Posterior cingulate gyrus (tissue), 11 donors: ENCODE measurements at regions of chr11 and their contacts with region 1.

Region 1: DNA sequence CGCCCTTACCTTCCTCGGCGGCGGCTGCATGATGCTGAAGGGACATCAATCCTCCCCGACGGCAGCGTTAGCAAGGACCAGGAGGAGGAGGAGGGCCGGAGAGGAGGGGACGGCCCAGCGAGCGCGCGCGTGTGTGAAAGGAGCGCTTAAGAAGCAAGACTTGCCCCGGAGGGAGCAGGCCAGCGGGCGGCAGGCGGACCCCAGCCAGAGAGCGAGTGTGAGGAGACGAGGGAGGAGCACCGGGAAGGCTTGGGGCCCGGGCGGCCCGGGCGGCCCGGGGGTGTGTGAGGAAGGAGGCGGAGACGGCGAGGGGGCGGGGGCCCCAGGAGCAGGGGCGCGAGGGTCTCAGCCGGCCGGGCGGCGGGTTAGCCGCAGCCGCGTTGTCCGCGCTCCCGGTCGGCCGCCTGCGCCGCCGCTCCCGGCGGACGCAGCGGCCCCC is 251 bp downstream of the FCHSD2 start:
- DNase-seq: peak in 8 of 10 donors; percentile 41 to 92 (median 52)

Region 2: GRCh38 chr11:72831513-72832300 is 310.2 kb before region 1 on chr11:
- intact Hi-C with region 1: loop called (anchors 10 kb)
- DNase-seq: peak; percentile 76 to 98 (median 90)

Region 3: GRCh38 chr11:72924568-72925190 is 217.2 kb before region 1 on chr11:
- intact Hi-C with region 1: loop called (anchors 5 kb)
- DNase-seq: no peak

Region 4: DNA sequence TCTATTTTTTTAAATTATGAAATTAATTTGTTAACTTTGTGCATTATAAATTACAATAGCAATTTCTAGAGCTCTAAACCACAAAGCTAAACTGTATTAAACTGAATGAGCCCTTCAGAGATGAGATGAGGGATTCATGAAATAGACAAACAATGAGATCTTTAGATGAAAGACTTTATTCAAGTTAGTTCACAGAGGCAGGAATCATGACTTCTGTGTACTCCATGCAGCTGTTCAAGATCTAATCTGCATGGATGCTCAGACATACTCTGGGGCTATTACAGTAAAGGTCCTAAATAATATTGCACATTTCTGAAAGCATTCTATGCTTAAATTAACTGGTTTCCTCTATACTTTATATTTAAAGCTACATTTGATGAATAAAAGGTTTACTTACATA is 122.4 kb before region 1 on chr11:
- intact Hi-C with region 1: loop called (anchors 5 kb)
- DNase-seq: no peak

Region 5: DNA sequence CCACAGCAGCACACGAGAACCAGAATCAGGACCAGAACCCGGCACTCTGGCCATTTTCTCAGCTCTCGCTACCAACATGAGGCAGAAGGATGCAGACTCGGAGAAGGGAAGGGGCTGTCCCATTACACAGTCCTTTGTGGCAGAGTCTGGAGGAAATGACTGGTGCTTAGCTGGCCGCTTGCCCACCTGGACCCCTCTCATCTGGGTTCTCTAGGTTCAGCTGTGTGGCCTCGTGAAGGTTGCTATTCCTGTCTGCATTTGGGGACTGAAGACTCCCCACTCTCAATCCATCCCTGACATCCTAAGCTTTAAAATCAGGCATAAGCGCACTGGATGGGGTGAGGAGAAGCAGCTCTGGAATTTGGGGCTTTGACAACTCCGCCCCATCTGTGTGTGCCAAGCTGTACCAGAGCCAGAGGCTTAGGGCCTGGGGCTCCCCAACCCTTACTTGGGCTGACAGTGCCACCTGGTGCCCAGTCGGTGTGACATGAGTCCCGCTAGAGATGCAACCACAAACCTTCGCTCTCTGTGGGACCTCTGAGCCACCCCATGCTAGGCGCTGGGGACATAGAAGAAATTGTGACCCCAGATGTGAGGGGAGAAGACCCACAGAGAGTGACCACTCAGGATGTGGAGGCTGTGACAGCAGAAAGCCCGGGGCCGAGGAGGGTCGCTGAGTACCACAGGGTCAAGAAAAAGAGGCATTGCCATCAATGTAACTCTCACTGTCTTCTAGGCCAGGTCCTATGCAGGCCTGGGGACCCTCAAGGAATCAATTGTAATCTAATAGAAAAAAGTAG is 36.1 kb after region 1 on chr11:
- intact Hi-C with region 1: loop called (anchors 5 kb)
- DNase-seq: peak; percentile 51 to 97 (median 83)